PC-9 (cell line): ENCODE measurements at regions of chr17 and their contacts with region 1.

Region 1: DNA sequence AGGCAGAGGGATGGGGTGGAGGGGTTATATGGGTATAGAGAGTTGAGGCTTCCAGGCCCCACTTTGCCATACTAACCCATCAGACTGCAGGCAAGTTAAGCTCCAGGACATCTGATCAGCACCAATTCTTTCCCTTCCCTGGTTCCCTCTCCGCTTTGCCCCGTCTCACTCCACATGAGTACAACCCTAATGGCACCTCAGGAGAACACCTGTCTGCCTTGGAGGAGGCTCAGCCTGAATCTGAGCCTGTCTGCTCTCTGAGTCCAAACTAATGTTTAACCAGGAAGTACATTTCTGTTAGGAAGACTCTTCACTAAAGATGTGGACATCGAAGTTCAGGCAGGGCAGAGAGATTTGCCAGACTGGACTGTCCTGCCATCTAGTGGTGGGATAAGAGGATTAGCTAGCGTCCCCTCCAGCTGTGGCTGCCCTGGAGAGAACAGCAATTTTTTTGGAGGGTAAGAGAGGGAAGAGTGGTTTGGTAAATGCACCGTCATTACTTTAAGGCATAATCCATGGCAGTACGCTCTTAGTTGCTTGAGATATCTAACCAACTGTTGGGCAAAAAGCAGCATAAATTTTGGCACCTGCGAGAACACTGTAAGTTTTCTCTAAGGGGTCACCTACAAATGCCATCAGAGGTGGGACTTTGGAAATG is 29.2 kb upstream of the LRRC75A start:
- DNase-seq: peak; percentile 76 to 77
- H3K4me3 ChIP-seq: no peak overlapping the region
- H3K27ac ChIP-seq: no peak overlapping the region
- H3K4me1 ChIP-seq: peaks cover 13% of the 10 kb centered on the region
- H3K27me3 ChIP-seq: no peaks in the 10 kb centered on the region
- CTCF ChIP-seq: peak; percentile 86

Region 2: DNA sequence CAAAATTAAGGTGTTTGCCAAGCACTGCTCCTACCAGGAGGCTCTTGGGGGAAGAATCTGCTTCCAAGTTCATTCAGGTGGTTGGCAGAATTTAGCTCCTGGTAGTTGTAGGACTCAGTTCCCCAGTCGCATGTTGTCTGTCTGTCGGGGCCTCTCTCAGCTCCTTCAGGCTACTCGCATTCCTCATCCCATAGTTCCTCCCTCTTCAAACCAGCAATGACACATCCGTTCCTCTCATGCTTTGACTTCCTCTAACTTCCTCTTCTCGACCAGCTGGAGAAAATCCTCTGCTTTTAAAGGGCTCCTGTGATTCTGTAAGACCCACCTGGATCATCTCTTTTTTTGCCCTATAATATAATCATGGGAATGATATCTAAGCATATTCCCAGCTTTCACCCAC is 1364.1 kb before region 1 on chr17:
- CTCF ChIA-PET with region 1: no interaction called
- POLR2A ChIA-PET with region 1: no interaction called
- intact Hi-C with region 1: no loop called
- DNase-seq: no peak
- H3K4me3 ChIP-seq: no peak overlapping the region
- H3K27ac ChIP-seq: no peak overlapping the region
- H3K4me1 ChIP-seq: no peaks in the 10 kb centered on the region
- H3K27me3 ChIP-seq: peaks cover 13% of the 10 kb centered on the region
- CTCF ChIP-seq: no peak

Region 3: DNA sequence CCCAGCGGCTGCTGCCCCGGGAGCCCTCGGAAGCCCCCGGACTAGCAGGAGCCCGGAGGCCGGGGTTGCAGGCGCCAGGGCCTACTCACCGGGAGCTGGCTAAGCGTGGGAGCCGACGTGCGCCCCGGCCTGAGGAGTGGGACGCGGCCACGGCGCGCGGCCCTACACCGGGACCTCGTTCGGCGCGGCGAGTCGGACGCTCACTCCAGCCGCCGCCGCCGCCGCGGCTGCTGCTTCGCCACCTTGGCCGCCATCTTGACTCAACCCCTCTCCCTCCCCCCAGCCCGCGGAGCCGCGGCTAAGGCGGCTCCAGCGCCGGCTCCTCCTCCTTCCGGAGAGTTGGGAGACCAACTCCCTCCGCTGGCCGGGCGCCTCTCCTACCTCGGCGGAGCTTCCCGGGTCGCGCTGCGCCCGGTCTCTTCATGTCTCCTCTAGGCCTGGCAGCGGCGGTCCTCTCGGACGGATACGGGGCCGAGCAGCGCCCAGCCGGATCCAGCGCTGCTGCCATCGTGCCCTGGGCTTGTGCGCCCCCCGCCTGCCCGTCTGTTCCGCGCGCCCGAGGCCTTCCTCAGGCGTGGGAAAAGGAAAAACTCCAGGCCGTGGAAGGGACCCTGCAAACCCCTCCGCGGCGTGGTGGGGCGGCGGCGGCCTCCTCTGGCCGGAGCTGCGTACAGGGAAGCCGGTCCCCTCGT is 305.8 kb before region 1 on chr17 and contains the start of gene NCOR1:
- CTCF ChIA-PET with region 1: interaction called, 3 read pairs
- POLR2A ChIA-PET with region 1: no interaction called
- intact Hi-C with region 1: loop called (anchors 10 kb)
- DNase-seq: peak; percentile 73 to 93
- H3K4me3 ChIP-seq: peak within 1 kb of the TSS; percentile 92
- H3K27ac ChIP-seq: peak within 1 kb of the TSS; percentile 90
- H3K4me1 ChIP-seq: peaks cover 23% of the 10 kb centered on the region
- H3K27me3 ChIP-seq: no peaks in the 10 kb centered on the region
- CTCF ChIP-seq: no peak; the same call in 1 of the 2 replicates
- total RNA-seq, gene NCOR1: 139 and 171 TPM in 2 replicates

Region 4: GRCh38 chr17:16363749-16364536 is 157.3 kb before region 1 on chr17:
- CTCF ChIA-PET with region 1: interaction called, 4 read pairs
- POLR2A ChIA-PET with region 1: no interaction called
- intact Hi-C with region 1: loop called (anchors 2 kb)
- DNase-seq: peak in 1 of 2 experiments; percentile 73
- H3K4me3 ChIP-seq: no peak overlapping the region
- H3K27ac ChIP-seq: no peak overlapping the region
- H3K4me1 ChIP-seq: no peaks in the 10 kb centered on the region
- H3K27me3 ChIP-seq: no peaks in the 10 kb centered on the region
- CTCF ChIP-seq: peak; percentile 90

Region 5: GRCh38 chr17:16456742-16457316 is 64.4 kb before region 1 on chr17:
- CTCF ChIA-PET with region 1: interaction called, 21 read pairs
- POLR2A ChIA-PET with region 1: interaction called, 8 read pairs
- intact Hi-C with region 1: loop called (anchors 1 kb)
- DNase-seq: no peak
- H3K4me3 ChIP-seq: no peak overlapping the region
- H3K27ac ChIP-seq: no peak overlapping the region
- H3K4me1 ChIP-seq: peaks cover 10% of the 10 kb centered on the region
- H3K27me3 ChIP-seq: no peaks in the 10 kb centered on the region
- CTCF ChIP-seq: no peak

Region 6: DNA sequence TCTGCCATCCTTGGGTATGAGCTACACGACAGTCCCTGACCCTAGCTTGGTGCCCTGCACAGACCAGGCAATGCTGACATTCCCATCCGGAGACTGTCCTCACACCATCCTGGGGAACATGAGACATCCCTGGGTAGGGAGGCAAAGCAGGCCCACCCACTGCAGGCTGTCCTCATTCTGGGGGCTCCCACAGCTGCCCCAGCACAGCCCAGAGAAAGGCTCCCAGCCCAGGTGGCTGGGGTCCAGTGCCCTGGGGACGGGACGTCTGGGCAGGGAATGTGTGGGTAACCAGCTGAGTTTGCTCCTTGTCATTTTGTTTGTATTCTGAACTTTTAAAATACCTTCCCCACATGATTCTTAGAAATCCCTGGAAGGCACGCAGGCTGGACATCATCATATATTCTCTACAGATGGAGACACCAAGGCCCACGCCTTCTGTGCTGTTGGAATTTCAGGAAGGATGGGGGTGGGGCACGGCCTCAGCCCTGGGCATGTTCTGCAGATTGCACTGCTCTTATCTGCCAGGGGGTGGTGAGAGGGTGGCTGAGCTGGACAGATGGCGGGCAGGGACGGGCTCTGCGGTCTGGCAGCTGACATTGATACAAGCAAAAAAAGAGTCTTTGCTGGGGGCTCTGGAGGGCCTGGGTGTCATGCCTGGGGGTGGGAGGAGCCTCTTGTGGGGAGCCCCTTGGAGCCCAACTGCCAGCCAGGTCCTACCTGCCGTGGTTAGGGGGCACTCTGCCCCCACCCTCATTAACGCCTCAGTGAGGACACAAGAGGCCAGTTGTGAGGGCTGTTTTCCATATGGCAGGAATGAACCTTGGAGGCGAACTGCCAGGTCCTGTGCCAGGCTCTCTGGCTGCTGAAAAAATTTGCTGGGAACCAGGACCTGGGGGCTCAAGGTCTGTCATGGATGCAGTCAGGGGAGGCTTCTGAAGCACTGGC is 57.6 kb before region 1 on chr17:
- CTCF ChIA-PET with region 1: interaction called, 3 read pairs
- POLR2A ChIA-PET with region 1: no interaction called
- intact Hi-C with region 1: loop called (anchors 2 kb)
- DNase-seq: peak in 1 of 2 experiments; percentile 47
- H3K4me3 ChIP-seq: no peak overlapping the region
- H3K27ac ChIP-seq: no peak overlapping the region
- H3K4me1 ChIP-seq: peaks cover 10% of the 10 kb centered on the region
- H3K27me3 ChIP-seq: no peaks in the 10 kb centered on the region
- CTCF ChIP-seq: no peak

Region 7: GRCh38 chr17:16474368-16474725 is 46.9 kb before region 1 on chr17:
- CTCF ChIA-PET with region 1: no interaction called
- POLR2A ChIA-PET with region 1: no interaction called
- intact Hi-C with region 1: no loop called
- DNase-seq: no peak
- H3K4me3 ChIP-seq: no peak overlapping the region
- H3K27ac ChIP-seq: no peak overlapping the region
- H3K4me1 ChIP-seq: no peaks in the 10 kb centered on the region
- H3K27me3 ChIP-seq: no peaks in the 10 kb centered on the region
- CTCF ChIP-seq: no peak

Region 8: DNA sequence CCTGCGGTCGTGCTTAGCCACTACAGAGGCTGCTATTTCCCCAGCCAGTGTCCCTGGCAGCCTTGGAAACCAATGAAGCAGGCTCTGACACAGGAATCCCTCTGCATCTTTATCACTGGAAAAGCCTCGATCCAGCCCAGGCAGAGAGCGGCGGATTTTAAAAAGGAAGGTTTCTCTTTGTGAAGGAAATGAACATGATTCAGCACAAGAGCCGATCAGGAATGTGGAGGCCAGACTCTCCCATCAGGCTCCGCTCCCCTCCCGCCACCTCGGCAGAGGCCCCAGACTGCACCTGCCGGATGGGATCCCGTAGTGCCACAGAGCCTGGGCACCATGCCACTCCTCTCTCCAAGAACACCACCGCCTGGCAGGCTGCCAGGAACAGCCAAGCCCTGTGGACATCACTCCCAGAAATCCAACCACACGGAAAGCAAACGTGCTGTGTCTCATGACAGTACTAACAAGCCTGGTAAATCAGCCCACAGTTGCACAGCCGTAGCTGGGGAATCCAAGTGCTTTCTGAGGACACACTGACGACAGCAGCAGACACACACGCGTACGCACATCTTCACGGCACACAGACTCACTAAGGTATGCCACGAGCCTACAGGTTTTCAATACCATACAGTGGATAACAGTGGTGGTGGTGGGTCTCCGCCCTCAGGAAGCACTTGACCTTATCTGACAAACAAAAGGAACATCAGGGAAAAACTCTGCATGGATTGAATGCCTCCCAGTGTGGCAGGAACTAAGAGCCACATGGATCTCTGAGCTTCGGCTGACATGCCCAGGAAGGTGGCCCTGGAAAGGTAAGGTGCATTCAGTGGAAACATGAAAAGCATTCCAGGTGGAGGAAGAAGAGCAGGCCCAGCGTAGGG is 34.6 kb before region 1 on chr17:
- CTCF ChIA-PET with region 1: interaction called, 3 read pairs
- POLR2A ChIA-PET with region 1: no interaction called
- intact Hi-C with region 1: loop called (anchors 2 kb)
- DNase-seq: peak in 1 of 2 experiments; percentile 97
- H3K4me3 ChIP-seq: no peak overlapping the region
- H3K27ac ChIP-seq: no peak overlapping the region
- H3K4me1 ChIP-seq: peaks cover 7% of the 10 kb centered on the region; the same call in 1 of the 2 replicates
- H3K27me3 ChIP-seq: no peaks in the 10 kb centered on the region
- CTCF ChIP-seq: no peak

Region 9: GRCh38 chr17:17570140-17570797 is 1049.1 kb after region 1 on chr17:
- CTCF ChIA-PET with region 1: no interaction called
- POLR2A ChIA-PET with region 1: no interaction called
- intact Hi-C with region 1: no loop called
- DNase-seq: peak in 1 of 2 experiments; percentile 62
- H3K4me3 ChIP-seq: no peak overlapping the region
- H3K27ac ChIP-seq: no peak overlapping the region
- H3K4me1 ChIP-seq: peaks cover 9% of the 10 kb centered on the region
- H3K27me3 ChIP-seq: no peaks in the 10 kb centered on the region
- CTCF ChIP-seq: peak; percentile 66